Sigmoid colon (tissue), 7 donors: ENCODE measurements at regions of chr3 and their contacts with region 1.

Region 1: DNA sequence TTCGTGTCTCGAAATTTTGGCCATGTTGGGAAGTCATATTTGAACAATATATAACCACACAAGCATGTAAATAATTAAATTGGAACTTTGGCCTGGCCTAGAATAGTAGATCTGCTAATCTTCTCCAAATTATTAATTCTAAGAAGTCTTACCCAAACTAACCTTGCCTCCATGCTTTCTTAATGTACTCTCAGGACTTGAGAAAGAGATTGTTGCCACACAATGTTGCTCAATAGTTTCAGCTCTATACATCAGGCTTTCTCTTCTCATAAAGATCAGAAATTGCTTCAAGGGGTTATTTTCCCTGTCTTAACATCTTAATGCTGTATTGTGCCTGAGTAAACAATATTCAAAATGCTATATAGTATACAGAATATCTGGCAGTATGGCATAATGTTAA is 202.7 kb upstream of the LRIG1 start:
- DNase-seq: no peak
- H3K4me3 ChIP-seq: no peak overlapping the region
- H3K27ac ChIP-seq: peak overlapping the region in 3 of 4 donors; percentile 68 to 83 (median 80)
- H3K4me1 ChIP-seq: peaks cover 0 to 59% (median 53%) of the 10 kb centered on the region in 4 donors
- H3K27me3 ChIP-seq: no peaks in the 10 kb centered on the region
- CTCF ChIP-seq: no peak
- EP300 ChIP-seq: no peak
- POLR2A ChIP-seq: no peak

Region 2: GRCh38 chr3:66407611-66408218 is 295.8 kb before region 1 on chr3:
- intact Hi-C with region 1: loop called (anchors 5 kb)
- DNase-seq: peak; percentile 86
- H3K4me3 ChIP-seq: no peak overlapping the region
- H3K27ac ChIP-seq: peak overlapping the region; percentile 73 to 95 (median 86)
- H3K4me1 ChIP-seq: peaks cover 0 to 100% (median 99%) of the 10 kb centered on the region in 4 donors
- H3K27me3 ChIP-seq: no peaks in the 10 kb centered on the region
- CTCF ChIP-seq: peak; percentile 68 to 90 (median 86)
- EP300 ChIP-seq: no peak
- POLR2A ChIP-seq: no peak